A549 (cell line): ENCODE measurements at regions of chr16 and their contacts with region 1.

Region 1: DNA sequence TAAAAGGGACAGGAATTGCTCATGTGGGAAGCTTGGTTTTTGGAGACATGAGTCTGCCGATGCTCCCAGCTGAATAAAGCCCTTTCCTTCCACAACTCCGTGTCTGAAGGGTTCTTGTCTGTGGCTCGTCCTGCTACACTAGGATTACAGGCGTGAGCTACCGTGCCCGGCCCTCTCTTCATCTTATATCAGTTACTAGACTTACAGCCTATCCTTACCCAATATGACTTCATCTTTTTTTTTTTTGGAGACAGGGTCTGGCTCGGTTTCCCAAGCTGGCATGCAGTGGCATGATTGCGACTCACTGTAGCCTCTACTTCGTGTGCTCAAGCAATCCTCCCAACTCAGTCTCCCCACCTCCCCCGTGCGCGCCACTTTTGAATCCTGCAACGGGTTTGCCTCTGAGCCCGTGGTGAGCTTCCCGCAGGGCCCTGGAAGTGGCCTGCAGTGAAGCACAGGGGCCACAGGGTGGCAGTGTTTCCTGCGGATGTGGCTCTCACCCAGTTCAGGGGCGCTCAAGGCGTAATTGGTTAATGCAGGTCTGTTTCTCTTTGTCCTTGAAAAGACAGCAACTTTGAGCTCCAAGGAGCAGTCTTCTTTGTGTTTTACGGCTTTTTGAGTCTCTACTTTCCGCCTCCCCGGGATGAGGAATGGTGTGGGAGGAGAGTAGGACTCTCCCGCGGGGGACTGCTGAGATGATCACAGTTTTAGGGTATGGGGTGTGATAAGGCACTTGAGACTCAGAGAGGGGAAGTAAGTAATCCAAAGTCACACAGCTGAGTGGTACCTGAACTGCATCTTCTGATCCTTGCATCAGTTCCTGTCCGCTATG is 22.7 kb upstream of the GPRC5B start:
- DNase-seq: peak; percentile 67 to 74
- ATAC-seq: peak; percentile 97 to 99
- H3K4me3 ChIP-seq: no peak overlapping the region
- H3K27ac ChIP-seq: no peak overlapping the region
- H3K4me1 ChIP-seq: no peaks in the 10 kb centered on the region
- CTCF ChIP-seq: peak; percentile 95
- EP300 ChIP-seq: no peak
- POLR2A ChIP-seq: no peak
- RAD21 ChIP-seq: peak; percentile 93 to 95

Region 2: DNA sequence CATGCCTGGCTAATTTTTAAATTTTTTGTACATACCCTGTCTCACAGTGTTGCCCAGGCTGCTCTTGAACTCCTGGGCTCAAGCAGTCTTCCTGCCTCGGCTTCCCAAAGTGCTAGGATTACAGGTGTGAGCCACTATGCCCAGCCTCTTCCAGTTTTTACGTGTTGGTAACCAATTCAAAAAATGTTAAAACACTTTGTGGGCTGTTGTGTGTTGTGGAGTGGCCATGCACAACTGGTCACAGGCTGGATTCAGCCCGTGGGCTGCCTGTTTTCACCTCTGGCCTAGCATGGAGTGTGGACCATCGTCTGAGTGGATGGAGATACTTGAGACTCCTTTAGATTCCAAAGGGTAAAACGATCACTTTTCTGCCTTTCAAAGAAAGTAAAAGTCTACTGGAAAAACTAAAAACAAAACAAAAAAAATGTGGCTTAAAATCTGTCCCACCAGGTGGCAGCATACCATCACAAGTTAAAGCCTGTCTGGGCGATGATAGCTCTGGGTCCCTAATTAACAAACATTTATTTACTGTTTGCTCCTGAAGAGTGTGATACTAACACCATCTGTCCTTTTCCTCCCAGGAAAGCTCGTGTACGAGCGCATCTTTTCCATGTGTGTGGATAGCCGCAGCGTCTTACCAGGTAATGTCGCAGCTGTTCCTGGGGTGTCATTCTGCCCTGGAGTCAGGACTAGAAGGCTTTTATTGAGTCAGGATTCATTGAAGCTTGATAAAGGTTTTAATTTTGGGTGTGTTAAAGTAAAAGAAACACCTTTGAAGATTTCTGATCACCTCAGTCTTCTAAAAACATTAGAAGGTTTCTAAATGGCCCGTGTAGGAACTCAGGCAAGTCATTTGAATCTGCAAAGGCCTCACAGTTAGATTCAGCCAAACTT is 306.0 kb before region 1 on chr16:
- CTCF ChIA-PET with region 1: interaction called, 10 read pairs
- POLR2A ChIA-PET with region 1: no interaction called
- DNase-seq: peak; percentile 41 to 42
- ATAC-seq: peak; percentile 56 to 58; a peak in 4 of 6 replicates
- H3K4me3 ChIP-seq: no peak overlapping the region
- H3K27ac ChIP-seq: peak overlapping the region in 1 of 2 experiments; percentile 43; a peak in 3 of 6 replicates
- H3K4me1 ChIP-seq: peaks cover 14% of the 10 kb centered on the region
- CTCF ChIP-seq: peak; percentile 88
- EP300 ChIP-seq: no peak
- POLR2A ChIP-seq: no peak
- RAD21 ChIP-seq: peak; percentile 89 to 92

Region 3: DNA sequence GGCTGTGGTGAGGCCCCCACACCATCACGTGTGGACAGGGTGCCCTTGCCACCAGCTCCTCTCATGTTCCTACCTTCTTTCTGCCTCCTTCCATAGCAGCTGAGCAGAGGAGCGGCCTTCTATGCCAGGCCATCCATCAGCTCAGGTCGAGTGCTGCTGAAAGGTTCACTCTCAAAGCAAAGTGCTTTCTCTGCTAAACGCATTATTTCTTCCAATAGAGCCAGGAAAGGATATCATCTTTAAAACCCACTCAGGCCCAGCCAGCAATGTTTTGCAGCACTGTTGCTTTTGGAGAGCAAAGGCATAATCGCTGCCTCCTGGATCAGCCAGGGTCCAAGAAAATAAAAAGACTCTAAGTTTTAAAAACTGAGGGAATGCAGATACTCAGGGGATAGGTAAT is 32.2 kb after region 1 on chr16:
- CTCF ChIA-PET with region 1: interaction called, 21 read pairs
- POLR2A ChIA-PET with region 1: no interaction called
- DNase-seq: no peak
- ATAC-seq: no peak
- H3K4me3 ChIP-seq: no peak overlapping the region
- H3K27ac ChIP-seq: no peak overlapping the region
- H3K4me1 ChIP-seq: no peaks in the 10 kb centered on the region
- CTCF ChIP-seq: no peak
- EP300 ChIP-seq: no peak
- POLR2A ChIP-seq: no peak
- RAD21 ChIP-seq: no peak

Region 4: DNA sequence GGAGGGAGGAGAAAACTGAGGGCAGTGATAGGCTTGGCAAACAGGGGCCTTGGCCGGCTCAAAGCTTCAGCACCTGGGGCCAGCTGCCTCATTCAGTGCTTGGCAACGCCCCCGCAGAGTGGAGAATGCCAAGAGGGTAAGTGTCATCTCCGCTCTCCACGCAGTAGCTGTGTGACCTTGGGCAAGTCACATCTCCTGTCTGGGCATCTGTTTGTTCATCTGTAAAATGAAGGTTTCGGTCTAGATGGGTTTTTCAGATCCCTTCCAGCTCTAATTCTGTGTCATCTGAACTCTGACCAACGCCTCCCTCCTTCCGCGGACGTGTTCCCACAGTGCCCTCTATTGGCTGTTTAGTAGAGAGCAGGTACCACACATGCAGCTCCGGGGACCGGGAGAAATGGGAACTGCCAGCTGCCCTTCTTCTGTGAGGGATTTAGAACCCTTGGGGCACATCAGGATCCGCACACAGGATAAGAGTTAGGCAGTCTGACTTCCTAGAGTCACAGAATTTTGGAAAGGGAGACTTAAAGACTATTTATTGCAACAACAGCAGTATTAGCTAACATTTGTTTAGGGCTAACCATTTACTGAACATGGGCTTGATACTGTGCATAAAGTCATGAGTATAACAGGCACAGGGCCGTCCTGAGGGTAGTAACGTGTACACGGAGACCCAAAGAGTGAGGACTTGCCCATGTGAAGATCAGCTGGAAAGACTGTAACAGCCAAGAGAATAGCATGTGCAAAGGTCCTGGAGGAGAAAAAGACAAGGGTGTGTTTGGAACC is 393.1 kb after region 1 on chr16:
- CTCF ChIA-PET with region 1: interaction called, 316 read pairs
- POLR2A ChIA-PET with region 1: interaction called, 4 read pairs
- DNase-seq: peak; percentile 62 to 63
- ATAC-seq: peak; percentile 91 to 96
- H3K4me3 ChIP-seq: no peak overlapping the region
- H3K27ac ChIP-seq: no peak overlapping the region
- H3K4me1 ChIP-seq: no peaks in the 10 kb centered on the region
- CTCF ChIP-seq: peak; percentile 73
- EP300 ChIP-seq: no peak
- POLR2A ChIP-seq: no peak
- RAD21 ChIP-seq: peak; percentile 85 to 92

Region 5: GRCh38 chr16:20364051-20364450 is 456.7 kb after region 1 on chr16:
- CTCF ChIA-PET with region 1: interaction called, 15 read pairs
- POLR2A ChIA-PET with region 1: no interaction called
- DNase-seq: no peak
- ATAC-seq: no peak
- H3K4me3 ChIP-seq: no peak overlapping the region
- H3K27ac ChIP-seq: no peak overlapping the region
- H3K4me1 ChIP-seq: no peaks in the 10 kb centered on the region
- CTCF ChIP-seq: no peak
- EP300 ChIP-seq: no peak
- POLR2A ChIP-seq: no peak
- RAD21 ChIP-seq: no peak

Region 6: GRCh38 chr16:20383106-20384029 is 476.0 kb after region 1 on chr16:
- CTCF ChIA-PET with region 1: interaction called, 374 read pairs
- POLR2A ChIA-PET with region 1: interaction called, 6 read pairs
- DNase-seq: peak; percentile 70 to 74
- ATAC-seq: peak; percentile 88 to 98
- H3K4me3 ChIP-seq: no peak overlapping the region
- H3K27ac ChIP-seq: no peak overlapping the region
- H3K4me1 ChIP-seq: no peaks in the 10 kb centered on the region
- CTCF ChIP-seq: peak; percentile 66
- EP300 ChIP-seq: no peak
- POLR2A ChIP-seq: no peak
- RAD21 ChIP-seq: peak; percentile 77 to 84